ENCODE measurements at regions of chr11 and their contacts with region 1.

Region 1: GRCh38 chr11:6737872-6738466 is 33.8 kb downstream of the OR2AG2 start:
- DNase-seq: peak; percentile 87
- H3K4me3 Mint-ChIP-seq: no peak overlapping the region
- H3K27ac Mint-ChIP-seq: peak overlapping the region; percentile 86
- H3K4me1 Mint-ChIP-seq: peaks cover 92% of the 10 kb centered on the region
- H3K27me3 Mint-ChIP-seq: no peaks in the 10 kb centered on the region

Region 2: DNA sequence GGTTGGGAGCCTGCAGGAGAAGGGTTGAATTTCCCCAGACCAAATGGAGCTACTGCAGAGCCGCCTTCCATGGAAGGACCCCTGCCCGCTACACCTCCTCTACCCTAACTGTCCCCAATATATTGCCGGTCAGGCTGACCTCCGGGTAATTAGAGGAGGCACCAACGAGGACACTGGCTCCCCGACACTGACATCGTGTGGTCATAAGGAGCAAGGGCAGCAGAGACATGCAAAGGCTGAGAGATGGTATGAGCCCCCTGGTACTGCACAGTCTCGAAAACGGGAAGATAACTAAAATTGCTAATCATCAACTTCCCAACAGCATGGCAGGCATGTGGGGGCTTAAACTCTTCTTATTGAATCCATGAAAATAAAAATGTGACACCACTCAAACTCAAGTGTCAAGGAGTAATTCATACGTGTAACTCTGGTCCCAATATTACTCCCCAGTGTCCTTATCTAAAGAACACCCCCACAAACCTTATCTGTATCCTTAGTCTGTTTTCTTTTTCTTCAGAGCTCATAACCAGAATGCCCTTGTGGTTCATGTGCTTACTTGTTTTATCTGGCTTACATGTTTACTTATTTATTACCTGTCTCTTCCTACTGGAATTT is 422.1 kb before region 1 on chr11:
- CTCF ChIA-PET with region 1: no interaction called
- intact Hi-C with region 1: loop called (anchors 5 kb)
- DNase-seq: peak; percentile 46
- H3K4me3 Mint-ChIP-seq: no peak overlapping the region
- H3K27ac Mint-ChIP-seq: no peak overlapping the region
- H3K4me1 Mint-ChIP-seq: peaks cover 9% of the 10 kb centered on the region
- H3K27me3 Mint-ChIP-seq: peaks cover 44% of the 10 kb centered on the region

Region 3: GRCh38 chr11:6473481-6474422 is 264.2 kb before region 1 on chr11 and contains the start of gene TRIM3:
- CTCF ChIA-PET with region 1: interaction called, 3 read pairs
- intact Hi-C with region 1: loop called (anchors 1 kb)
- DNase-seq: peak; percentile 62
- H3K4me3 Mint-ChIP-seq: peak within 1 kb of the TSS; percentile 80
- H3K27ac Mint-ChIP-seq: no peak within 1 kb of the TSS
- H3K4me1 Mint-ChIP-seq: peaks cover 19% of the 10 kb centered on the region
- H3K27me3 Mint-ChIP-seq: no peaks in the 10 kb centered on the region
- total RNA-seq, gene TRIM3: 7.7 to 9.4 TPM

Region 4: DNA sequence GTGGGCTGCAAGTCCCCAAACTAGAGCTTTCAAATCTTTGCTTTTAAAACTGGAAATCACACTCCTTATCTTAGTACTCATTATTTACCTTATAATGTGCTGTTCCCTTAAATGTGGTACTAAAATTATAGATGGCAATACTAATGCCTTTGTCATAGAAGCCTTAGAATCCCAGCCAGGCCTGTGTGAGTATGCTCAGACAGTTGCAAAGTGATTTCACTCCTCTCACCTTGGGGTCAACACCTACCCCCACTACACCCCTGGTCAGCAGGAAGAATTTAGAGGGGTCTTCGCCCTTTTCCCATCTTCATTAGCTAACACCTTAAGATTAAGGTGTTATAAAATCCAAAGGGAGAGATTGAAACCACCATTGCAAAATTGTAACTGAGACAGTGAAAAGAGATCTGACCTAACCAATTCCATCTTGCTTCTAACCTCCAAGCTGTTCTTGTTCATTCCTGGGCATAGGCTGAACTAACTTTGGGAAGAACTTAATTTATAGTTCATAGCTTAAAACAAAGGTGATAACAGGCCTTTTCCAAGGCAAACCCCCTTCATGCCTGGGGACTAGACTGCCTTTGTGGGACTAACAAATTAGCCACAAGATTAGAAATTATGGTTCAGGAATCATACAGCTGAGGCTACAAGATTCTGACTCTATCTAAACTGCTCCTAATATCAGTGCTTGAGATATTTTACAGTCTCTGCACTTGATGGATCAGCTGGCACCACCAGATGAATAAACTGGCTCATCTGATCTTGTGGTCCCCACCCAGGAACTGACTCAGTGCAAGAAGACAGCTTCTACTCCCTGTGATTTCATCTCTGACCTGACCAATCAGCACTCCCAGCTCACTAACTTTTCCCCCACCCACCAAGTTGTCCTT is 44.4 kb before region 1 on chr11:
- CTCF ChIA-PET with region 1: interaction called, 5 read pairs
- intact Hi-C with region 1: loop called (anchors 1 kb)
- DNase-seq: peak; percentile 84
- H3K4me3 Mint-ChIP-seq: no peak overlapping the region
- H3K27ac Mint-ChIP-seq: peak overlapping the region; percentile 37
- H3K4me1 Mint-ChIP-seq: peaks cover 38% of the 10 kb centered on the region
- H3K27me3 Mint-ChIP-seq: no peaks in the 10 kb centered on the region

Region 5: DNA sequence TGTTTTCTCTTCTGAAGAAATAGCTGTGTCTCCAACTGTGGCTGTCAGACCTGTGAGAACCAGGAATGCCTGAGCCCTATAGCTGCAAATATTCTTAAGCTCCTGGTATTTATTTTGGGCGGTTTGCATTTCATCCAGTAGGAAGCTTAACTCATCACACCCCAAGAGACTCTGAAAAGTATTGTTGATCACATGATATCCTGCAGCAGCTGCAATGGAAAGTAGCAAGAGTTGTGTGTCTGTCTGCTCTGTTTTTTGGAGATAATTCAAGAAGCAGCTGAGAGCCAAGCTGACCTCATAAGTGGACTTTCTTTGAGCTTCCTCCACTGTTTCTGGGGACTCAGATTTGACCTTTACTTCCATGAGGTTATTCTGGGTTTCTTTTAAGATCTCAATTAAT is 18.4 kb before region 1 on chr11:
- CTCF ChIA-PET with region 1: interaction called, 11 read pairs
- intact Hi-C with region 1: loop called (anchors 2 kb)
- DNase-seq: no peak
- H3K4me3 Mint-ChIP-seq: no peak overlapping the region
- H3K27ac Mint-ChIP-seq: no peak overlapping the region
- H3K4me1 Mint-ChIP-seq: peaks cover 63% of the 10 kb centered on the region
- H3K27me3 Mint-ChIP-seq: no peaks in the 10 kb centered on the region

Region 6: GRCh38 chr11:6855971-6856541 is 118.1 kb after region 1 on chr11:
- CTCF ChIA-PET with region 1: no interaction called
- intact Hi-C with region 1: loop called (anchors 2 kb)
- DNase-seq: no peak
- H3K4me3 Mint-ChIP-seq: no peak overlapping the region
- H3K27ac Mint-ChIP-seq: no peak overlapping the region
- H3K4me1 Mint-ChIP-seq: peaks cover 7% of the 10 kb centered on the region
- H3K27me3 Mint-ChIP-seq: peaks cover 2% of the 10 kb centered on the region

Region 7: DNA sequence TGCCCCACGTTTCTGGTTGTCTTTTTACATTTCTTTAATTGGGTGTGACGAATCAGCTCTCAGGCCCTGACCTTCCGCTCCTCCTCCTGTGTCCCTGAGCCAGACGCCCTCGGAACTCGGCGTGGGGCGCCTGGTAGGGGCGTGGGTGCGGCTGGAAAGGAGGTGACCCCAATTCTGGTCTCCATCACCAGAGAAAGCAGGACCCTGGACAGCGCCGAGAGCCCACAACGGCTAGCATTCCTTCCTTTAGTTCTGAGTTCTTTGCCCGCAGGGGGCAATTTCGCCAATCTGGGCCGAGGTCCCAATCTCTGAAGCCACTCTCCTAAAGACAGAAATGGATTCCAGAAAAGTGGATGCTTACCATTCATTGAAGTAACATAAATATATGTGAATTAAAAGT is 339.1 kb after region 1 on chr11:
- CTCF ChIA-PET with region 1: no interaction called
- intact Hi-C with region 1: no loop called
- DNase-seq: no peak
- H3K4me3 Mint-ChIP-seq: no peak overlapping the region
- H3K27ac Mint-ChIP-seq: no peak overlapping the region
- H3K4me1 Mint-ChIP-seq: no peaks in the 10 kb centered on the region
- H3K27me3 Mint-ChIP-seq: peaks cover 6% of the 10 kb centered on the region